PC-9 (cell line): ENCODE measurements at regions of chr12 and their contacts with region 1.

Region 1: DNA sequence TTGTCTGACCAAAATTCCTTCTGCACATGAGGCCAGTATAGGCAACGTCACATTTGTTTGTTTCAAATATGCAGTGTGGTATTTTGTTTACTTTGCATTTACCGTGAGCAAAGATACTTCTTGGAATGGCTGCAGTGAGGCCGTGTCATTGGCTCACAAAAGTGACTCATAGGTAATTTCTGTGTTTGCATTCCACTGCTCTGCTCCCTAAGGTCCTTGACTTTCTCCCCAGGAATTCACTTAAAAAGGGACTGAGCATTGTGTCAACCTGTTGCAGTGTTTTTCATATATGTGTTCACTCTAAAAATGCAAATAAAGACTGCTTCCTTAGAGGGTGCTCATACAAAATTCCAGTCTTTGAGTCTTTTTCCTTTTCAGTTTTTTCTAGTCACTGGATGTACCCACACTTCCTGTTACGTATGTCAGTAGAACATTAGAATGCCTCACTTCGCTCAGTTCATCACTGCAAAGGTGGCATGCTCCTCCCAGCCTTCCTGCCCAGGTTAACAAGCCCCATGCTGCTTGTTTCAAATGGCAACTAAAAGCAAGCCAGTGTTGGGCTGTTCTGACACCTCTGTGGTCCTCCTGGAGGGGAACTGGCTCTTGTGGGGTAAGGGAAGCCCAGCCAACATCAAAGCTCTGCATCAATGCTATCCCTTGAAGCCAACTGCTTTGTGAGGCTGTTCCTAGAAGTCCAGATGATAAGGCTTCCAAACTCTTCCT is 9.1 kb downstream of the C12orf76 start:
- DNase-seq: peak; percentile 68 to 99
- H3K4me3 ChIP-seq: peak overlapping the region; percentile 32; the same call in 1 of the 2 replicates
- H3K27ac ChIP-seq: peak overlapping the region; percentile 95
- H3K4me1 ChIP-seq: peaks cover 35% of the 10 kb centered on the region
- H3K27me3 ChIP-seq: no peaks in the 10 kb centered on the region
- CTCF ChIP-seq: no peak

Region 2: GRCh38 chr12:109951751-109952150 is 87.5 kb before region 1 on chr12:
- CTCF ChIA-PET with region 1: no interaction called
- POLR2A ChIA-PET with region 1: no interaction called
- intact Hi-C with region 1: loop called (anchors 5 kb)
- DNase-seq: peak; percentile 85 to 88
- H3K4me3 ChIP-seq: 0 out of 2 replicates have a peak overlapping the region, but pooled peaks have one; percentile 9
- H3K27ac ChIP-seq: peak overlapping the region; percentile 91
- H3K4me1 ChIP-seq: peaks cover 32% of the 10 kb centered on the region
- H3K27me3 ChIP-seq: no peaks in the 10 kb centered on the region
- CTCF ChIP-seq: no peak

Region 3: DNA sequence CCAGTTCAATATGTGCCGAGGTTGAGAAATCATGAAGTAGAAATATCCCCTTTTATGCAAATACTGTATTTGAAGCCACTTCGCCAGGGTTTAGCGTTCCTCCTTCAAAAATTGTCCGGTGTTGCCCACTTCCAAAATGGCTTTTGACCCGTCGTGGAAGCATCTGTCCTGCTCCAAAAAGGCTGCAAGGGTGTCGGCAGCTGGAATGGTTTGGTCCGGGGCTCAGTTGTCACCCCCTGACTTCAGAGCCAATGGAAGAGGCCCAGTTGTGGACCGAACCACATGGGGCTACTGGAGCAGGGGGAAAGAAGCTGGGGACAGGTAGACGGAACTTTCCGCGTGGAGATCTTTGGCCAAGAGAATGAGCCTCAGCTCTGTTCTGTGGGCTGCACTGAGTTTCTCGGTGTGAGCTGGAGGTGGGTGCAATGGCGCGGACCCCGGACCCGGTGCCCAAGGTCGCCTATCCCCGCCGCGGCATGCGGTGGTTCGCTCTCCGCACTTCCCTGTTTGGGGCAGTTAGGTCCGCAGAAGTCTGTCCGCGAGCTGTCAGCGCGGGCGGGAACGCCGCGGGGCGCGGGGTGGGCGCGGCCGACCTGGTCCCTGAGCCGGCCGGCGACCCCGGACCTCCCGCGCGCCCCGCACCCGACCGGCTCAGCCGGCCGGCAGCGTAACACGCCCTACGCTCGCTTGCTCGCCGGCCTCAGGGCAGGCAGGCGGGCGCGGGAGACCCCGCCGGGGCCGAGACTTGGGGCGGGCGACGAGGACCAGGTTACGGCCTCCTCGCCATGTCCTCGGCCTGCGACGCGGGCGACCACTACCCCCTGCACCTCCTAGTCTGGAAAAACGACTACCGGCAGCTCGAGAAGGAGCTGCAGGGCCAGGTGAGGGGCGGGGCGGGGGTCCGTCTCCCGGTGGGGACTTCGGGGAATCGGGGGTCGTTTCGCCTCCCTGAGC is 40.1 kb before region 1 on chr12 and contains the start of gene ANKRD13A:
- CTCF ChIA-PET with region 1: interaction called, 3 read pairs
- POLR2A ChIA-PET with region 1: no interaction called
- intact Hi-C with region 1: loop called (anchors 1 kb)
- DNase-seq: peak; percentile 76 to 84
- H3K4me3 ChIP-seq: peak within 1 kb of the TSS; percentile 68
- H3K27ac ChIP-seq: peak within 1 kb of the TSS; percentile 53; the same call in 1 of the 2 replicates
- H3K4me1 ChIP-seq: peaks cover 54% of the 10 kb centered on the region
- H3K27me3 ChIP-seq: no peaks in the 10 kb centered on the region
- CTCF ChIP-seq: no peak
- total RNA-seq, gene ANKRD13A: 61.8 and 66.9 TPM in 2 replicates

Region 4: GRCh38 chr12:110100315-110100970 is 61.2 kb after region 1 on chr12:
- CTCF ChIA-PET with region 1: no interaction called
- POLR2A ChIA-PET with region 1: no interaction called
- intact Hi-C with region 1: loop called (anchors 5 kb)
- DNase-seq: peak; percentile 53 to 60
- H3K4me3 ChIP-seq: no peak overlapping the region
- H3K27ac ChIP-seq: no peak overlapping the region
- H3K4me1 ChIP-seq: no peaks in the 10 kb centered on the region
- H3K27me3 ChIP-seq: no peaks in the 10 kb centered on the region
- CTCF ChIP-seq: peak; percentile 97